Activated B cell treated with CpG ODN at 0.5 μM for 24 hours (primary cell): ENCODE measurements at regions of chr22 and their contacts with region 1.

Region 1: DNA sequence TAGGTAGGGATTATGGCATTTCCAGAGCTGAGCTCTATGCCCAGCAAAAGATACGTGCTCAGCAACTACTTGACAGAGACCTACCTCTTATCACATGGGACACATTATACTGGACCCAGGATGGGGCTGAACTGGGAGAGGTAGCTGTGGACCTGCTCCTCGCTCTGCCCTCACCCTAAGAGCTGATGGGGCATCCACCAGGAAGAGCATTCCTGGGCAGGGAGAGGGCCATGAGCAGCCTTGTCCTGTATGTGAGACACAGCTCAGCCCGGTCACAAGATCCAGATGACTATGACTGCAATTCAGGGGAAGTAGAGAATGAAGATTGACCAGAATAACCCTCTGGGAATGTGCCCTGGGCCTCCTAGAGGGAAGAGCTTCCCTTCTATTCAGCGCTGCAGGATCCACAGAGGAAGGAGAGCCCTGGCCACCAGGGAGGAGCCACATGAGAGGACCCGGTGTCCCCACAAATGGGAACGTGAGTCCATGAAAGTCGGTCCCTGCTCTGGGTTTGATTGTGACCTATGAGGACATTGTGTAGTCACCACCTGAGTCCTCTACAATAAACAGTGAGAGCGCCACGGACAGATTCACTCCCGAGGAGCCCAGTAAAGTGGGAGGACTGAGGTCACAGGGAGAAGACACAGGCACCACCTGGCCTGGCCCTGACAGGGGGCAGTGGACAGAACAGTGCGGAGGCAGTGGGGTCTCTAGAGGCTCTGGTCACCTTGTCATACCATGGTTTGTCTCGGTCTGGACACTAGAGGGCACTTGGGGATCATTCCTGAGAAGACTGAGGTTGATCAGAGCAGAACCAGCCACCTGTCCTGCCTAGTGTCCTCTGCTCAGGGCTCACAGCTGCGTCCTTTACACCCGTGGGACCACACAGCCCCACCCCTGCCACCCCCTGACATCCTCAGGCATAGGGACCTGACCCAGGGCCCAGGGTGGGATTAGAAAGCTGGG is 99.5 kb downstream of the ZNF280B start:
- DNase-seq: no peak
- ATAC-seq: peak; percentile 60
- H3K4me3 Mint-ChIP-seq: peak overlapping the region; percentile 19
- H3K27ac Mint-ChIP-seq: no peak overlapping the region
- H3K4me1 Mint-ChIP-seq: peaks cover 61% of the 10 kb centered on the region
- H3K27me3 Mint-ChIP-seq: no peaks in the 10 kb centered on the region
- CTCF ChIP-seq: no peak

Region 2: GRCh38 chr22:22156716-22157347 is 252.2 kb before region 1 on chr22:
- CTCF ChIA-PET with region 1: no interaction called
- POLR2A ChIA-PET with region 1: no interaction called
- intact Hi-C with region 1: no loop called
- DNase-seq: peak; percentile 64
- ATAC-seq: peak; percentile 75
- H3K4me3 Mint-ChIP-seq: peak overlapping the region; percentile 78
- H3K27ac Mint-ChIP-seq: peak overlapping the region; percentile 98
- H3K4me1 Mint-ChIP-seq: peaks cover 52% of the 10 kb centered on the region
- H3K27me3 Mint-ChIP-seq: no peaks in the 10 kb centered on the region
- CTCF ChIP-seq: peak; percentile 81

Region 3: GRCh38 chr22:22362936-22363335 is 46.1 kb before region 1 on chr22:
- CTCF ChIA-PET with region 1: interaction called, 4 read pairs
- POLR2A ChIA-PET with region 1: no interaction called
- intact Hi-C with region 1: loop called (anchors 5 kb)
- DNase-seq: no peak
- ATAC-seq: peak; percentile 68
- H3K4me3 Mint-ChIP-seq: no peak overlapping the region
- H3K27ac Mint-ChIP-seq: peak overlapping the region; percentile 74
- H3K4me1 Mint-ChIP-seq: peaks cover 66% of the 10 kb centered on the region
- H3K27me3 Mint-ChIP-seq: no peaks in the 10 kb centered on the region
- CTCF ChIP-seq: no peak

Region 4: DNA sequence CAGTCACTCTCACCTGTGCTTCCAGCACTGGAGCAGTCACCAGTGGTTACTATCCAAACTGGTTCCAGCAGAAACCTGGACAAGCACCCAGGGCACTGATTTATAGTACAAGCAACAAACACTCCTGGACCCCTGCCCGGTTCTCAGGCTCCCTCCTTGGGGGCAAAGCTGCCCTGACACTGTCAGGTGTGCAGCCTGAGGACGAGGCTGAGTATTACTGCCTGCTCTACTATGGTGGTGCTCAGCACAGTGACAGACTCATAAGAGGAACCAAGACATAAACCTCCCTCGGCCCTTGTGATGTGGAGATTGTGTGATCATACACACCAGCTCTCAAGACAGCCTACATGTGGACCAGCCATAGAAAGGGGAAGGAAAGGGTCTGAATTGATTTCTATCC is 13.8 kb before region 1 on chr22:
- CTCF ChIA-PET with region 1: no interaction called
- POLR2A ChIA-PET with region 1: interaction called, 4 read pairs
- intact Hi-C with region 1: loop called (anchors 1 kb)
- DNase-seq: no peak
- ATAC-seq: peak; percentile 90
- H3K4me3 Mint-ChIP-seq: peak overlapping the region; percentile 42
- H3K27ac Mint-ChIP-seq: peak overlapping the region; percentile 86
- H3K4me1 Mint-ChIP-seq: peaks cover 48% of the 10 kb centered on the region
- H3K27me3 Mint-ChIP-seq: no peaks in the 10 kb centered on the region
- CTCF ChIP-seq: no peak

Region 5: GRCh38 chr22:22450343-22450839 is 41.4 kb after region 1 on chr22:
- CTCF ChIA-PET with region 1: interaction called, 3 read pairs
- POLR2A ChIA-PET with region 1: no interaction called
- intact Hi-C with region 1: loop called (anchors 1 kb)
- DNase-seq: peak; percentile 46
- ATAC-seq: peak; percentile 97
- H3K4me3 Mint-ChIP-seq: peak overlapping the region; percentile 63
- H3K27ac Mint-ChIP-seq: peak overlapping the region; percentile 90
- H3K4me1 Mint-ChIP-seq: peaks cover 38% of the 10 kb centered on the region
- H3K27me3 Mint-ChIP-seq: no peaks in the 10 kb centered on the region
- CTCF ChIP-seq: no peak